Endothelial cell of umbilical vein (primary cell): ENCODE measurements at regions of chr11 and their contacts with region 1.

Region 1: DNA sequence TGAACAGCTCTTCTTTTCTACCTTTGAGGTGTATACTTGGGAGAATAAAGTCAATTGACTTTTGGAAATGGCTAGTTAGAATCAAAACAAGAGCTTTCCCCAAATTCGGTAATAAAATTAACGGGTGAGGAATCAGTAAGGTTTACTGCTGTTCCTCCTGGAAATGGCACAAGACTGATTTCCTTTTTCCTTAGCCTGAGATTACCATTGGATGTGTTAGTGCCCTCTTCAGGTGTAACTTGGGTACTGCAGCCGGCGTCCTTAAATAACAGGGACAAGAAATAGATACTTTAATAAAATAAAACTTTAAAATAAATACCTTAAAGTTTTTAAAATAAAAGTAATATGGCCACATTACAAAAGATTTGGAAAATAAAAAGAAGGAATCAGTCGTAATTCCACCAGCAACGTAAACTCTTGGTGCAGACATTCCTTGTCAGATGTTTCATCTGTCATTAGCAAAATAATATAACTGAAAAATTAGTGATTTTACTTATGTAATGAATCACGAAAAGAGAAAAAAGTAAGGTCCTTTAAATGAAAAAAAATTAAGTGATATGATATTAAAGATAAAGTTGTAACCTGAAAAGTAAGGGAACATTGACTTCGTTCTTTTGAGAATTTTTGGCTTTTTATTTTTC is 29.7 kb downstream of the ZFTA start:
- DNase-seq: peak; percentile 89
- H3K4me3 ChIP-seq: no peak overlapping the region
- H3K27ac ChIP-seq: no peak overlapping the region
- H3K4me1 ChIP-seq: no peaks in the 10 kb centered on the region
- H3K27me3 ChIP-seq: no peaks in the 10 kb centered on the region
- CTCF ChIP-seq: peak; percentile 67 to 75
- POLR2A ChIP-seq: no peak

Region 2: GRCh38 chr11:63652671-63653070 is 86.2 kb before region 1 on chr11:
- CTCF ChIA-PET with region 1: interaction called, 12 read pairs
- POLR2A ChIA-PET with region 1: no interaction called
- dilution Hi-C with region 1: no loop called
- intact Hi-C with region 1: no loop called
- DNase-seq: peak; percentile 25
- H3K4me3 ChIP-seq: no peak overlapping the region
- H3K27ac ChIP-seq: no peak overlapping the region
- H3K4me1 ChIP-seq: no peaks in the 10 kb centered on the region
- H3K27me3 ChIP-seq: no peaks in the 10 kb centered on the region
- CTCF ChIP-seq: no peak
- POLR2A ChIP-seq: no peak

Region 3: GRCh38 chr11:63671322-63672155 is 67.3 kb before region 1 on chr11 and contains the start of gene ATL3:
- CTCF ChIA-PET with region 1: interaction called, 20 read pairs
- POLR2A ChIA-PET with region 1: no interaction called
- dilution Hi-C with region 1: no loop called
- intact Hi-C with region 1: loop called (anchors 1 kb)
- DNase-seq: peak; percentile 97
- H3K4me3 ChIP-seq: peak within 1 kb of the TSS; percentile 73 to 96 (median 76)
- H3K27ac ChIP-seq: peak within 1 kb of the TSS; percentile 65
- H3K4me1 ChIP-seq: peaks cover 15% of the 10 kb centered on the region
- H3K27me3 ChIP-seq: no peaks in the 10 kb centered on the region
- CTCF ChIP-seq: peak in 1 of 2 donors; percentile 9
- POLR2A ChIP-seq: peak; percentile 88
- total RNA-seq, gene ATL3: 70.0 and 70.2 TPM in 2 replicates

Region 4: DNA sequence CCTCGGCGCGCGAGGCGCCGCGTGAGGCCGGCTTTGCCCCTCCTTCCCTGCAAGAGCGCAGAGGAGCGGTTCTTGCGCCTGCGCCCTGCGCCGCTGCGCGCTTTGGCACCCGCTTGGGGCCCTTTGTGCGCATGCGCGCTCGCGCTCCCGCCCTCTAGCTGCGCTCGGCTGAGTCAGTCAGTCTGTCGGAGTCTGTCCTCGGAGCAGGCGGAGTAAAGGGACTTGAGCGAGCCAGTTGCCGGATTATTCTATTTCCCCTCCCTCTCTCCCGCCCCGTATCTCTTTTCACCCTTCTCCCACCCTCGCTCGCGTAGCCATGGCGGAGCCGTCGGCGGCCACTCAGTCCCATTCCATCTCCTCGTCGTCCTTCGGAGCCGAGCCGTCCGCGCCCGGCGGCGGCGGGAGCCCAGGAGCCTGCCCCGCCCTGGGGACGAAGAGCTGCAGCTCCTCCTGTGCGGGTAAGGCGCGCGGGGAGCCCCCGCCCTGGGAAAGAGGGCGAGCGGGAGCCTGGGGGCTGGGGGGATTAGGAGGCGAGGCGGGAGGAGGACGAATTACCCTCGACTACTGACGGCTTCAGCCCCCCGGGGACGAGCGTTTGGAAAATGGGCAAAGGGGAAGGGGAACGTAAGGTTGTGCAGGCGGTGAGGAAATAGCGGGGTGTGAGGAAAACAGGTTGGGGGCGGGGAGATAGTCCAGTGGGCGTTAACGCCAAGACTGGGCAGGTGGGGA is 57.4 kb before region 1 on chr11 and contains the start of gene RTN3:
- CTCF ChIA-PET with region 1: interaction called, 25 read pairs
- POLR2A ChIA-PET with region 1: no interaction called
- dilution Hi-C with region 1: no loop called
- intact Hi-C with region 1: loop called (anchors 1 kb)
- DNase-seq: peak; percentile 100
- H3K4me3 ChIP-seq: peak within 1 kb of the TSS; percentile 91 to 99 (median 95)
- H3K27ac ChIP-seq: peak within 1 kb of the TSS; percentile 45
- H3K4me1 ChIP-seq: peaks cover 17% of the 10 kb centered on the region
- H3K27me3 ChIP-seq: no peaks in the 10 kb centered on the region
- CTCF ChIP-seq: peak in 1 of 2 donors; percentile 16
- POLR2A ChIP-seq: peak; percentile 97
- total RNA-seq, gene RTN3: 109 and 112 TPM in 2 replicates

Region 5: DNA sequence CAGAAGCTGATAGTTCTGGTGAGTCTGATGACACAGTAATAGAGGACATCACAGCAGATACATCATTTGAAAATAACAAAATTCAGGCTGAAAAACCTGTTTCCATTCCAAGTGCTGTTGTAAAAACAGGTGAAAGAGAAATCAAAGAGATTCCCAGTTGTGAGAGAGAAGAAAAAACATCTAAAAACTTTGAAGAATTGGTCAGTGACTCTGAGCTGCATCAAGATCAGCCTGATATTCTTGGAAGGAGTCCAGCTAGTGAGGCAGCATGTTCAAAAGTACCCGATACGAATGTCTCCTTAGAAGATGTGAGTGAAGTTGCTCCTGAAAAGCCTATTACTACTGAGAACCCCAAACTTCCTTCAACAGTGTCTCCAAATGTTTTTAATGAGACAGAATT is 18.9 kb before region 1 on chr11:
- CTCF ChIA-PET with region 1: interaction called, 10 read pairs
- POLR2A ChIA-PET with region 1: no interaction called
- dilution Hi-C with region 1: no loop called
- intact Hi-C with region 1: no loop called
- DNase-seq: no peak
- H3K4me3 ChIP-seq: no peak overlapping the region
- H3K27ac ChIP-seq: no peak overlapping the region
- H3K4me1 ChIP-seq: no peaks in the 10 kb centered on the region
- H3K27me3 ChIP-seq: no peaks in the 10 kb centered on the region
- CTCF ChIP-seq: no peak
- POLR2A ChIP-seq: no peak

Region 6: GRCh38 chr11:63761919-63762653 is 23.2 kb after region 1 on chr11:
- CTCF ChIA-PET with region 1: no interaction called
- POLR2A ChIA-PET with region 1: no interaction called
- dilution Hi-C with region 1: no loop called
- intact Hi-C with region 1: no loop called
- DNase-seq: no peak
- H3K4me3 ChIP-seq: no peak overlapping the region
- H3K27ac ChIP-seq: no peak overlapping the region
- H3K4me1 ChIP-seq: peaks cover 13% of the 10 kb centered on the region
- H3K27me3 ChIP-seq: no peaks in the 10 kb centered on the region
- CTCF ChIP-seq: no peak
- POLR2A ChIP-seq: no peak